Activated CD8-positive, alpha-beta memory T cell treated with anti-CD3 and anti-CD28 coated beads, Interleukin-2, amount 10 ng/mL, durations not matched to agents 7 days and 5 days (primary cell): ENCODE measurements at regions of chr5 and their contacts with region 1.

Region 1: DNA sequence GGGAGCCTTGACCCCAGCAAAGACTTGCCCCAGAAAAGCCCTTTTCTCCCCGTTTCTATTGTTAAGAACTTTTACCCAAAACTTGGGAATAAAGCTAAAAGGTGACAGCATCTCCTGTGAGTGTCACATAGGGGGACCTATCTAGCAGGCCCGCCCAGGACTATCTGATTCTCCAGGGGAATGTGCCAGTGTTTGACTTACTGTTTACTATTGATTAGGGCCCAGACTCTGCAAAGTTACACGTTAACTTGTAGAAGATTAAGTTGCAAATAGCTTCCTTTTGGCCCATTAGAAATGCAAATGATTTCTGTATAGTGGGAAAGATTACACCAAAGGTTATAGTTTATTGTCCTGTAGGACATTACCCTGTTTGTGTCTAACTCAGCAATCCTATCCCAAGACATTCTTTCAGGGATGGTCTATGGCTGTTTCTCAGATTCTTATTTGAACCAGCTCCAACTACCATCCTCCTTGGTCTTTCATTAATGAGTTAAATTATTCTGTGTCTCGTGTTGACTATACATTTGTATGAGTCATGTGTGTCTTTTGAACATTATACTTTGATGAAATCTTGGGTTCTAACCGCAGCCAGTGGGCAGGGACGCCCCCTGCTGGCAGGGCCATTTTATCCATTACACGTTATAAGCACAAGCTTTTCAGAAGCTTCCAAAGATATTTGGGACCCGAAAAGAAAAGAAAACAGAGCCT is 60.7 kb downstream of the HRH2 start:
- DNase-seq: peak; percentile 67
- ATAC-seq: peak; percentile 20
- H3K4me3 Mint-ChIP-seq: no peak overlapping the region
- H3K27ac Mint-ChIP-seq: no peak overlapping the region
- H3K4me1 Mint-ChIP-seq: peaks cover 1% of the 10 kb centered on the region
- H3K27me3 Mint-ChIP-seq: peaks cover 2% of the 10 kb centered on the region

Region 2: GRCh38 chr5:175696139-175696854 is 22.3 kb before region 1 on chr5:
- CTCF ChIA-PET with region 1: interaction called, 11 read pairs
- DNase-seq: peak; percentile 80
- ATAC-seq: peak; percentile 76
- H3K4me3 Mint-ChIP-seq: no peak overlapping the region
- H3K27ac Mint-ChIP-seq: peak overlapping the region; percentile 66
- H3K4me1 Mint-ChIP-seq: peaks cover 14% of the 10 kb centered on the region
- H3K27me3 Mint-ChIP-seq: no peaks in the 10 kb centered on the region

Region 3: DNA sequence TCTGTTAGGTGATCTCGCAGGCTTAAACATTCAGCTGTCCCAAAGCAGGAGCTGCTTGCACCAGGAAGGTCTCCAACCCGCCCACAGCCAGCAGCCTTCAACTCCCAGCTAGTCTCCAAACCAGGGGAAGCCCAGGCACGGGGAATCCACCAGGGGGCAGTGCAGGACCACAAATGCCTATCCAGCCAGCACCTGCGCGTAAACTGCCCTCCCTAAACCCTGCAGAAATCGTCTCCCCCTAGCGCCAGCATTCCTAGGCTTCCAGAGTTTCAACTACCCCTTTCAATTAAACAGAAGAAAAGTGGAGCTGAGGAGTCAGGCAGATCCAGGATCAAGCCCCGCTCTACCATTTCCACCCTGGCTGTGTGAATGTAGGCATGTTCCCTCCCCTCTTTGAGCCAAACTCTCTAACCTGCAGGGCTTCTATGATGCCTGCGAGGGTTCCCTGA is 11.3 kb after region 1 on chr5:
- CTCF ChIA-PET with region 1: interaction called, 28 read pairs
- DNase-seq: peak; percentile 92
- ATAC-seq: peak; percentile 95
- H3K4me3 Mint-ChIP-seq: no peak overlapping the region
- H3K27ac Mint-ChIP-seq: no peak overlapping the region
- H3K4me1 Mint-ChIP-seq: peaks cover 3% of the 10 kb centered on the region
- H3K27me3 Mint-ChIP-seq: peaks cover 13% of the 10 kb centered on the region